Psoas muscle (tissue), 8 donors: ENCODE measurements at regions of chr3 and their contacts with region 1.

Region 1: GRCh38 chr3:24680214-24680967 is 185.7 kb upstream of the THRB start:
- DNase-seq: peak; percentile 68 to 84
- ATAC-seq: peak; percentile 54 to 80 (median 76)
- H3K4me3 ChIP-seq: no peak overlapping the region
- H3K27ac ChIP-seq: no peak overlapping the region
- H3K4me1 ChIP-seq: peaks cover 7% of the 10 kb centered on the region
- H3K27me3 ChIP-seq: no peaks in the 10 kb centered on the region
- CTCF ChIP-seq: peak; percentile 86

Region 2: GRCh38 chr3:23999012-23999641 is 681.3 kb before region 1 on chr3:
- intact Hi-C with region 1: loop called (anchors 1 to 10 kb)
- DNase-seq: peak; percentile 61 to 76
- ATAC-seq: peak in 1 of 4 donors; percentile 74
- H3K4me3 ChIP-seq: no peak overlapping the region
- H3K27ac ChIP-seq: no peak overlapping the region
- H3K4me1 ChIP-seq: no peaks in the 10 kb centered on the region
- H3K27me3 ChIP-seq: no peaks in the 10 kb centered on the region
- CTCF ChIP-seq: peak; percentile 85

Region 3: GRCh38 chr3:24004171-24004938 is 676.0 kb before region 1 on chr3:
- intact Hi-C with region 1: loop called (anchors 1 to 10 kb)
- DNase-seq: no peak
- ATAC-seq: no peak
- H3K4me3 ChIP-seq: no peak overlapping the region
- H3K27ac ChIP-seq: no peak overlapping the region
- H3K4me1 ChIP-seq: no peaks in the 10 kb centered on the region
- H3K27me3 ChIP-seq: no peaks in the 10 kb centered on the region
- CTCF ChIP-seq: no peak

Region 4: GRCh38 chr3:24264748-24265158 is 415.6 kb before region 1 on chr3:
- intact Hi-C with region 1: loop called in 1 of 2 experiments (anchors 10 kb)
- DNase-seq: no peak
- ATAC-seq: peak in 3 of 4 donors; percentile 37 to 58 (median 40)
- H3K4me3 ChIP-seq: no peak overlapping the region
- H3K27ac ChIP-seq: no peak overlapping the region
- H3K4me1 ChIP-seq: peaks cover 36% of the 10 kb centered on the region
- H3K27me3 ChIP-seq: no peaks in the 10 kb centered on the region
- CTCF ChIP-seq: peak; percentile 76

Region 5: GRCh38 chr3:24359645-24360462 is 320.5 kb before region 1 on chr3:
- intact Hi-C with region 1: no loop called
- DNase-seq: no peak
- ATAC-seq: no peak
- H3K4me3 ChIP-seq: no peak overlapping the region
- H3K27ac ChIP-seq: no peak overlapping the region
- H3K4me1 ChIP-seq: peaks cover 16% of the 10 kb centered on the region
- H3K27me3 ChIP-seq: no peaks in the 10 kb centered on the region
- CTCF ChIP-seq: peak; percentile 15

Region 6: DNA sequence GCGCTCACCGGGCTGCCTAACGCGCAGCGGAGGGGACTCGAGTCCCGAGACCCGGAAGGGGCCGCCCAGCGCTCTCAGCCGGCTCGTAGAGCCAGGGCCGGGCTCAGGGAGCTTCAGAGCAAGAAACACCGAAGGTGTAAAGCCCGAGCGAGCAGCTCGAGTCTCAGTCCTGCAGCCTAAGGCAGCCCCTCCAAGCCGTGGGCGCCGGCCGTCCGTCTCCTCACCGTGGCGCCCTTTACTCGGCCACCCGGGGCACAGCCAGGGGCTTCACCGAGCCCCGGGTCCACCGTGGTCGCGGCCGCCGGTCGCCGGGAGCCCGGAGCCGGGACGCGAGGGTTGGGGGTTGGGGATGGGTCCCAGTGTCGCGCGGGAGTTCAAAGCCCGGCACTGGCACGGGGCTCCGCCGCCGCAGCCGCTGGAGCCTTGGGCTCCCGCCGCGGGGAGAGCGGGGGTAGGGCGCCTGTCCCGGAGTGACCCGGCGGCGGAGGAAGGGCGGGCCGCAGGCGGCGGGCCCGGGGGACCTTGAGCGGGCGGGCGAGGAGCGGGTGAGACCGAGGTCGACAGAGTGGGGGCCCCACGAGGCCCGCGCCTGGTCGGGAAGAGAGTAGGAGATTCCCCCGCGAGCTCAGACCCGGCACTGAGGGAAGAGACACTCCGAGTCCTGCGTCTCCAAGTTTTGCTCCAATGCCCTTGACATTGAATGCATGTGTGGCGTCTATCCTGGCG is 158.8 kb before region 1 on chr3:
- intact Hi-C with region 1: loop called in 1 of 2 experiments (anchors 5 kb)
- DNase-seq: peak; percentile 69 to 85
- ATAC-seq: peak; percentile 90 to 96 (median 92)
- H3K4me3 ChIP-seq: peak overlapping the region; percentile 84
- H3K27ac ChIP-seq: peak overlapping the region; percentile 88
- H3K4me1 ChIP-seq: peaks cover 6% of the 10 kb centered on the region
- H3K27me3 ChIP-seq: no peaks in the 10 kb centered on the region
- CTCF ChIP-seq: peak; percentile 15